ENCODE measurements at regions of chr9 and their contacts with region 1.

Region 1: GRCh38 chr9:21506626-21507484 is 24.7 kb upstream of the IFNE start:
- DNase-seq: peak; percentile 37 to 75
- H3K4me3 ChIP-seq: no peak overlapping the region
- H3K27ac ChIP-seq: peak overlapping the region; percentile 43
- H3K4me1 ChIP-seq: peaks cover 11% of the 10 kb centered on the region
- H3K27me3 ChIP-seq: no peaks in the 10 kb centered on the region
- CTCF ChIP-seq: no peak

Region 2: GRCh38 chr9:21119093-21119770 is 387.6 kb before region 1 on chr9:
- CTCF ChIA-PET with region 1: no interaction called
- POLR2A ChIA-PET with region 1: no interaction called
- intact Hi-C with region 1: no loop called
- DNase-seq: no peak
- H3K4me3 ChIP-seq: no peak overlapping the region
- H3K27ac ChIP-seq: no peak overlapping the region
- H3K4me1 ChIP-seq: no peaks in the 10 kb centered on the region
- H3K27me3 ChIP-seq: no peaks in the 10 kb centered on the region
- CTCF ChIP-seq: no peak

Region 3: DNA sequence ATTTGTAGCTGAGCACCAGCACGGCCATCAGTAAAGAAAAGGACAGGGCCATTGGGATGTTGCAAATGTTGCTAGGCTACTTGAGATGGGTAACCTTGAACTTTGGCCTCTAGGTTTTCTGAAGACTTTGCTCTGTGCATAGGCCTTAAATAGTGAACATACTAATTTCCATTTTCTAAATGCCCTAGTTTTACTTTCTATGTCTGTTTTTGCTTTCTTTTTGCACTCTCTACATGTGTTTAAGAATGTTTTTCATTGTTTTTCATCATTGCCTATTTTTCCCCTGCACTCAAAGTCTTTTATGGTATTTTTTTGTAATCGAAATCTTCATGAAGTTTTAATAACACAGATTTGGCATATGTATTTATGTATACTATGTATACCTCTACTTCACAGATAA is 278.7 kb before region 1 on chr9 and contains the start of gene IFNA17:
- CTCF ChIA-PET with region 1: no interaction called
- POLR2A ChIA-PET with region 1: no interaction called
- intact Hi-C with region 1: no loop called
- DNase-seq: no peak
- H3K4me3 ChIP-seq: no peak within 1 kb of the TSS
- H3K27ac ChIP-seq: no peak within 1 kb of the TSS
- H3K4me1 ChIP-seq: no peaks in the 10 kb centered on the region
- H3K27me3 ChIP-seq: no peaks in the 10 kb centered on the region
- CTCF ChIP-seq: no peak
- total RNA-seq, gene IFNA17: not detected in 2 replicates

Region 4: DNA sequence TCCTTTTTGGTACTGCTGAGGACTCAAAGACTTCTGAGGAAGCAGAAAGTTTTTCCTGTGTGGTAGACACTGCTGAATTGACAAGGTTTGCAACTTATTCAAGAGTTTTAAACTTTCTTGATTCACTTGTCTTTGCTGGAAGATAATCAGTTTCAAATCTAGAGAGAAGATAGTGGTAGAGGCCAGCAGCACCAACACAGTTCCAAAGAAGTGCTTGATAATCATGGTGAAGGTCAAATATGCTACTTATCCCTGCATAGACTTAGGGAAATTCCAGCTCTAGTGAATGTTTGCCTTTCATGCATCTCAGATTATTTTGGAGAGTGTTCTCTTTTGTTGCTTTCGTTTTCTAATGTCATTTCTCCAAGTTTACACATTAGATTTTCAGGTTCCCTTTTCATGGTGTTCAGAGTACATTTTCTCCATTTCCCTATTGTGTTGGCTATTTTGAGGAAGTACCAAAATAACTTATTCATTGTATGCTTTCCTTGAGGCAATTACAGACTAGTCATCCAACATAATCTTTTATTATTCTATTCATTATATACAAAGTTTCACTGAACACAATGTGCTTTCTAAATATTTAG is 25.3 kb before region 1 on chr9:
- CTCF ChIA-PET with region 1: no interaction called
- POLR2A ChIA-PET with region 1: no interaction called
- intact Hi-C with region 1: no loop called
- DNase-seq: no peak
- H3K4me3 ChIP-seq: no peak overlapping the region
- H3K27ac ChIP-seq: no peak overlapping the region
- H3K4me1 ChIP-seq: no peaks in the 10 kb centered on the region
- H3K27me3 ChIP-seq: no peaks in the 10 kb centered on the region
- CTCF ChIP-seq: no peak

Region 5: DNA sequence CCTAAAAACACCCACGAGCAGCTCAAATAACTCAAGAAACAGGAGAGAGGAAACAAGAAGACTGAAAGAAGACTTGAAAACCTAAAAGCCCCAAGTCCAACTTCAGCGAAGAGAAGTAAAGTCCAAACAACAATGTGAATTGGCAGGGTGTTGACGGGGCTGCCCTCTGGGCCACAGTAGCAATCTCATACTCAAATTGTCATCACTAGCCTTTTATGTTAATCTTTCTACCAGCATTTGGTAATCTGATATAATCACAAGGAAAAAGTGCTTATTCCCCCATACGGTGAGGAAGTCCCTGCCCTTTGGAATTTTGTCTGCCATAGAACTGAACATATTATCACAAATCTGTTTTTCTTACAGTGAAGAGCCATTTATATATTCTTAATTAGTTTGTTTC is 26.7 kb after region 1 on chr9:
- CTCF ChIA-PET with region 1: no interaction called
- POLR2A ChIA-PET with region 1: no interaction called
- intact Hi-C with region 1: no loop called
- DNase-seq: no peak
- H3K4me3 ChIP-seq: no peak overlapping the region
- H3K27ac ChIP-seq: no peak overlapping the region
- H3K4me1 ChIP-seq: no peaks in the 10 kb centered on the region
- H3K27me3 ChIP-seq: no peaks in the 10 kb centered on the region
- CTCF ChIP-seq: no peak

Region 6: GRCh38 chr9:21549251-21549765 is 42.5 kb after region 1 on chr9:
- CTCF ChIA-PET with region 1: no interaction called
- POLR2A ChIA-PET with region 1: interaction called, 4 read pairs
- intact Hi-C with region 1: loop called (anchors 1 kb)
- DNase-seq: peak in 1 of 2 experiments; percentile 21
- H3K4me3 ChIP-seq: no peak overlapping the region
- H3K27ac ChIP-seq: no peak overlapping the region
- H3K4me1 ChIP-seq: 0 out of 2 replicates have a peak, but pooled peaks cover 3% of the 10 kb centered on the region
- H3K27me3 ChIP-seq: no peaks in the 10 kb centered on the region
- CTCF ChIP-seq: no peak

Measured in PC-9 (cell line).